Heart right ventricle (tissue), 16 donors: ENCODE measurements at regions of chr6 and their contacts with region 1.

Region 1: DNA sequence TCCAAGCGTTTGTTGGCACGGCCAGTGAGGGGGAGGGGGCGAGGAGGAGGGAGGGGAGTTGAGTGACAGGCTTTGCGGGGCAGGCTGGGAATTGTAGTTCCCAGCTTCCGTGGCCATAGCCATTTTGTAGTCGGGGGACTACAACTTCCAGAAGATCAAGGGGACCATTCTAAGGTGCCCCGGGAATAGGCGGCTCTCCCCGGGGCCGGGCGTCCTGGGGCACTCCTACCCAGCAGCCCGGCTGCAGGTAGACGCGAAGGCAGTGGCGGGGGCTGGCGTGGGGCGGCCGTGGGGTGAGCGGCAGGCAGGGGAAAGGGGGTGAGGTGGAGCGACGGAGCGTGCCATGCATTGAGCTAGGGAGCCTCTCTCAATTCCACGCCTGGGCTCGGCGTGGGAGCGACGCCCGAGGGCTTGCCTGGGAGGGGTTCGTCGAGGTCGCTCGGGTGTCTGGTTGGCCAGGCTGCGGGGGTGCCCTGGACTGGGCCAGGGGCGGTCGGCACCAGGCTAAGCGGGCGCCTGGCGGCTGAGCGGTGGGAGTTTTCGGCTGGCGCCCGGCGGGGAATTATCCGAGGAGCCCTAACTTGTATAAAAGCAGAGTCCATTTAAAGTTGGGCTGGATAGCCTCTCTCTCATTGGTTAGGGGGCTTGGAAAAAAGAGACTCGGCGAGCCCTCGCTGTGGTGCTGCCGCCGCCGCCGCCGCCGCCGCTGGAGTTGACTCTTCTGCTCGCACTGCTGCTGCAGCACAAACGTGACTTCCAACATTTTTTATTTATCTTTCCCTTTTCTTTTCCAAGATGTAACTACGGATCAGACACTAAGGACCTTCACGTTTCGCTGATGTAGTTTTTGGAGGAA is at the start of gene JARID2:
- DNase-seq: peak; percentile 99
- ATAC-seq: peak; percentile 83 to 93 (median 88)
- H3K4me3 ChIP-seq: peak within 1 kb of the TSS; percentile 56 to 90 (median 82)
- H3K27ac ChIP-seq: peak within 1 kb of the TSS; percentile 90 to 98 (median 94)
- H3K4me1 ChIP-seq: peaks cover 0 to 39% (median 30%) of the 10 kb centered on the region in 9 donors
- H3K27me3 ChIP-seq: no peaks in the 10 kb centered on the region
- CTCF ChIP-seq: peak in 1 of 9 donors; percentile 5
- total RNA-seq, gene JARID2: 5.8 to 11.6 (median 9.4) TPM

Region 2: DNA sequence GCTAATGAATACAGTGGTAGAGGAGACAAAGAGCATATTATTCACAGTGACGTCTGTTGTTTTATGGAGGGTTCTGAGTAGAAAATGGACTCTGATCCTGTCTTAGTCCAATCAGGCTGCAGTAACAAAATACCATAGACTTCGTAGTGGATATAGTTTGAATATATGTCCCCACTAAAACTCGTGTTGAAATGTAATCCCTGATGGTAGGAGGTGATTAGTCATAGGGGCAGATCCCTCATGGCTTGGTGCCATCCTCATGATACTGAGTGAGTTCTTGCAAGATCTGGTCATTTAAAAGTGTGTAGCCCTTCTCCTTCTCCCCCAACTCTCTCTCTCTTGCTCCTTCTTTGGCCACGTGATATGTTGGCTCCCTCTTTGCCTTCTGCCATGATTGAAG is 1045.5 kb before region 1 on chr6:
- intact Hi-C with region 1: loop called in 1 of 10 experiments (anchors 10 kb)
- DNase-seq: no peak
- ATAC-seq: no peak
- H3K4me3 ChIP-seq: no peak overlapping the region
- H3K27ac ChIP-seq: no peak overlapping the region
- H3K4me1 ChIP-seq: peaks cover 0 to 6% (median 0%) of the 10 kb centered on the region in 9 donors
- H3K27me3 ChIP-seq: no peaks in the 10 kb centered on the region
- CTCF ChIP-seq: no peak

Region 3: DNA sequence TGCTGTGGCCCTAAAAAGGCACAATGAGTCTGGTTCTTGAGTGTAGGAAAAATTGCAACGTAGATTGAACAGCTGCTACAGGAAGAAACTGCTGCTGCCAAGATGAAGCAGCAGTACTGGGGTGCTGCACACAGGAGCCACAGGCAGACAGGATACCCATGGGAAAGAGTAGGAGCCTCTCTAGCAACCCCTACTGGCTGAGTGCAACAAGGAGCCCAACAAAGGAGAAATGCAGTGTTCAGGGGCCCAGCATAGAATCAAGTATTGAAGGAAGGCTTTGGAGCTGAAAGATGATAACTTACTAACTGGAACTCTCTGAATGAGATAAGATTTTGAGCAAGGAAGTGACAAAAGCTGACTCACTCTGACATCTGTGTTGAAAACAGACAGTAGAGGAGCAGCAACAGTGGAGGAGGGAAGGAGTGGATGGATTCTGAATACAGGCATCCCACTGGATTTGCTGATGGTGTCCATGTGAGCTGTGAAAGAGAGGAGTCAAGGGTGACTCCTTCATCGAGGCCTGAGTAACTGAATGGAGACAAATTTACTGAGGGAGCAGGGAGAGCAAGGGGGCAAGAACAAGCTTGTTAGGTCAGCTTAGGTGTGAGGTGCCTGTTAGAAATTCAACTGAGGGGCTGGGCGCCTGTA is 534.4 kb before region 1 on chr6:
- intact Hi-C with region 1: loop called in 4 of 10 experiments (anchors 5 to 10 kb)
- DNase-seq: peak in 1 of 2 donors; percentile 49
- ATAC-seq: peak in 1 of 8 donors; percentile 12
- H3K4me3 ChIP-seq: no peak overlapping the region
- H3K27ac ChIP-seq: peak overlapping the region in 1 of 10 donors; percentile 73
- H3K4me1 ChIP-seq: peaks cover 7 to 49% (median 32%) of the 10 kb centered on the region in 9 donors
- H3K27me3 ChIP-seq: no peaks in the 10 kb centered on the region
- CTCF ChIP-seq: peak; percentile 22 to 73 (median 46)

Region 4: DNA sequence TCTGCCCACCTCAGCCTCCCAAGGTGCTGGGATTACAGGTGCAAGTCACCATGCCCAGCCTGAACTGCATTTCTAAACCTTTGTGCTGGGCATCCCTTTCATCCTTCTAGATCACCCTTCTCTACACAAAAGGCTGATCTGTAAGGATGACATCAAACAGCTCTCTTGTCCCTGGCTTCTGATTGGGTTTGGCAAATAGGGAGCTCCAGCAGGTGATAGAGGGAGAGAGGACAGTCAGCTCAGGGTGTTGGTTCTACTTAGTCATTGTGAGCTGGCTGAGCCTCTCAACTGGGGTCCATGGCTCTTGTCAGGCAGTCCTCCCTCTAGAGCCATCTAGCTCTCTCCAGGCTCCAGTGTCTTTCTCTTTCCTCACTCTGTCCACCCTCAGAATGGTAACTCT is 237.3 kb before region 1 on chr6:
- intact Hi-C with region 1: no loop called
- DNase-seq: no peak
- ATAC-seq: no peak
- H3K4me3 ChIP-seq: no peak overlapping the region
- H3K27ac ChIP-seq: no peak overlapping the region
- H3K4me1 ChIP-seq: no peaks in the 10 kb centered on the region
- H3K27me3 ChIP-seq: no peaks in the 10 kb centered on the region
- CTCF ChIP-seq: no peak

Region 5: DNA sequence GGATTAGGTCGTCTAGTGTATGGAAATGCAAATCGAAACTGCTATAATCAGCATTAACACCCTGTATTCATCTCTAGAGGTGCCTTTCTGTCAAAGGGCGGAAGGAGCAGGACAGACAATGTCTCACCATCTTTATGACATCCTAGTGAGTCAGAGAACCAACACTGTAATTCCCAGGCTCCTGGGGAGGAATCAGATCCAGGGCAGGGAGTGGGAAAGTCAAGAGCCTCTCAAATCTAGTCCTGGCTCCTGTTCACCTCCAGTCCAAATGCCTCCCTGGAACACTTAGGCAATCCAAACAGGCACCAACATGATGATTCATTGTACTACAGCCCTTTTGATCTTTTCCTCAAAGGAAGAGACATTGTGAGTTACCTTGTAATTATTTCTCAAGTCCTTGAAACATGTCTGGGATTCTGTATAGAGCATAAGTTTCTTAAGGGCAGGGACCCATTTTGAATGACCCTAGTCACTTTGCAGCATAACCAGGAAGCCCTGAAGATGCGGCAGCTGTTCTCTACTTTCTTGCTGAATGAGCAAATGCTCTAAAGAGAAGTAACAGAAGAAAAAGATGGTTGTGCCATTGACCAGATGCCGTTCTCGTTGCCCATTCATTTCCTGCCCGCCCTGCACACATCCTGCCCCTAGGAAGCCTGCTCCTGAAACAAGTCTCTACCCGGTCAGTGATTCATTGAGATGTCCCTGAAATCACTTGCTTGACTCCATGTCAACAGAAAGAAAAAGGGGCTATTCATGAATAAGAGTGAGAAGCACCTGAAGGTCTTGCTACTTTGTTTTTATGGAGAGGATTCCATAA is 112.5 kb before region 1 on chr6:
- intact Hi-C with region 1: no loop called
- DNase-seq: no peak
- ATAC-seq: peak in 1 of 8 donors; percentile 50
- H3K4me3 ChIP-seq: no peak overlapping the region
- H3K27ac ChIP-seq: peak overlapping the region in 1 of 10 donors; percentile 41
- H3K4me1 ChIP-seq: peaks cover 0 to 26% (median 0%) of the 10 kb centered on the region in 9 donors
- H3K27me3 ChIP-seq: no peaks in the 10 kb centered on the region
- CTCF ChIP-seq: no peak

Region 6: GRCh38 chr6:15264902-15265761 is 19.5 kb after region 1 on chr6:
- intact Hi-C with region 1: loop called in 1 of 10 experiments (anchors 2 kb)
- DNase-seq: peak in 1 of 2 donors; percentile 42
- ATAC-seq: peak; percentile 45 to 79 (median 66)
- H3K4me3 ChIP-seq: peak overlapping the region in 4 of 10 donors; percentile 12 to 18 (median 14)
- H3K27ac ChIP-seq: peak overlapping the region in 9 of 10 donors; percentile 40 to 84 (median 70)
- H3K4me1 ChIP-seq: peaks cover 22 to 89% (median 77%) of the 10 kb centered on the region in 9 donors
- H3K27me3 ChIP-seq: no peaks in the 10 kb centered on the region
- CTCF ChIP-seq: no peak

Region 7: GRCh38 chr6:15389765-15390723 is 144.5 kb after region 1 on chr6:
- intact Hi-C with region 1: loop called in 1 of 10 experiments (anchors 5 kb)
- DNase-seq: peak in 1 of 2 donors; percentile 32
- ATAC-seq: peak; percentile 39 to 72 (median 64)
- H3K4me3 ChIP-seq: peak overlapping the region in 1 of 10 donors; percentile 6
- H3K27ac ChIP-seq: peak overlapping the region in 6 of 10 donors; percentile 20 to 63 (median 50)
- H3K4me1 ChIP-seq: peaks cover 19 to 65% (median 52%) of the 10 kb centered on the region in 9 donors
- H3K27me3 ChIP-seq: no peaks in the 10 kb centered on the region
- CTCF ChIP-seq: peak; percentile 36 to 75 (median 61)

Region 8: GRCh38 chr6:15491255-15491985 is 245.8 kb after region 1 on chr6:
- intact Hi-C with region 1: loop called in 4 of 10 experiments (anchors 2 to 5 kb)
- DNase-seq: peak; percentile 72 to 84
- ATAC-seq: peak in 7 of 8 donors; percentile 55 to 86 (median 78)
- H3K4me3 ChIP-seq: no peak overlapping the region
- H3K27ac ChIP-seq: peak overlapping the region in 5 of 10 donors; percentile 9 to 55 (median 36)
- H3K4me1 ChIP-seq: peaks cover 4 to 43% (median 29%) of the 10 kb centered on the region in 9 donors
- H3K27me3 ChIP-seq: no peaks in the 10 kb centered on the region
- CTCF ChIP-seq: peak; percentile 88 to 98 (median 97)